Common myeloid progenitor, CD34-positive (primary cell): ENCODE measurements at regions of chr5 and their contacts with region 1.

Region 1: GRCh38 chr5:176447982-176448608 is at the start of gene FAF2:
- DNase-seq: peak; percentile 99
- H3K4me3 ChIP-seq: peak within 1 kb of the TSS; percentile 84 to 100 (median 96)
- H3K27ac ChIP-seq: peak within 1 kb of the TSS; percentile 96 to 99
- H3K4me1 ChIP-seq: peaks cover 4 to 28% (median 21%) of the 10 kb centered on the region in 4 experiments
- H3K27me3 ChIP-seq: no peaks in the 10 kb centered on the region

Region 2: DNA sequence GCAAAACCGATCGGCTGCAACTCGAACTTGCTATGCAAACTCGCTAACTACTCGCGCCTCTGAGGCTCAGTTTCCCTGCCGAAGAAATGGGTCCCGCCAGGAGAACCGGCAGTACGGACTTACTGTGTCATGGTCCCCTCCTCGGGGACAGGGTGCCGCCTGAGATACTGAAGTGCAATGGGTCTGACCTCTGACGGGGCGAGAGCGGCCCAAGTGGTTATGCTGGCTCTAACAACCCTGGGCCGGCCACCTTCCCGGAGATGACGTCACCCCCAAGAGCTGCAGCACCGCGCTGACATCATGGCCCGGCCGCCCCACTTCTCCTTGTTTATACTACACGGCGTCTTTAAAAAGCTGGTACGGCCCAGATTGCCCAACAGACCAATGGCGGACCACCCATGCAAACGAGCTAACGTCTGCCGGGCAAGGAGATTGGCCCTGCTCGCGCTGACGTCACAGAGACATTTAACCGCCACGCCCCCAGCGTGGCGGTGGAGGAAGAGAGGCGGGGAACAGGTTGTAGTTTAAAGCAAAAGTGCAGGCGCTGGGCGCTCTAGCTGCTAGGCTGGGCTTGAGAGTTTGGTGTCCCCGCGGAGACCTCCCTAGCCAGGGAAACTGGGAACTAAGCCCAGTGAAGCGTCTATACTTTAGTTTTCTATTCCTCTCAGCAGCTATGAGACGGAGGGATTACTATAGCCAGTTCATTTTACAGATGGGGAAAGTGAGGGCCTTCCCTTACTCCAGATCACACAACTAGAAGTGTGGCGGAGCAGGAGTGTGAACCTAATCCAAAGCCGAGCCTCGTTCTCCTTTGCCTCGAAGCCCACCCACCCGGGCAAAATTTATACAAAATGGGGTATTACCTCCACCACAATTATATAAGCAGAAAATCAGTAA is 89.8 kb after region 1 on chr5:
- CTCF ChIA-PET with region 1: interaction called, 6 read pairs
- POLR2A ChIA-PET with region 1: interaction called, 17 read pairs
- DNase-seq: peak; percentile 100
- H3K4me3 ChIP-seq: peak overlapping the region; percentile 89 to 100 (median 97)
- H3K27ac ChIP-seq: peak overlapping the region; percentile 94 to 98
- H3K4me1 ChIP-seq: peaks cover 27 to 83% (median 74%) of the 10 kb centered on the region in 4 experiments
- H3K27me3 ChIP-seq: no peaks in the 10 kb centered on the region